Endothelial cell of umbilical vein (primary cell): ENCODE measurements at regions of chrX and their contacts with region 1.

Region 1: DNA sequence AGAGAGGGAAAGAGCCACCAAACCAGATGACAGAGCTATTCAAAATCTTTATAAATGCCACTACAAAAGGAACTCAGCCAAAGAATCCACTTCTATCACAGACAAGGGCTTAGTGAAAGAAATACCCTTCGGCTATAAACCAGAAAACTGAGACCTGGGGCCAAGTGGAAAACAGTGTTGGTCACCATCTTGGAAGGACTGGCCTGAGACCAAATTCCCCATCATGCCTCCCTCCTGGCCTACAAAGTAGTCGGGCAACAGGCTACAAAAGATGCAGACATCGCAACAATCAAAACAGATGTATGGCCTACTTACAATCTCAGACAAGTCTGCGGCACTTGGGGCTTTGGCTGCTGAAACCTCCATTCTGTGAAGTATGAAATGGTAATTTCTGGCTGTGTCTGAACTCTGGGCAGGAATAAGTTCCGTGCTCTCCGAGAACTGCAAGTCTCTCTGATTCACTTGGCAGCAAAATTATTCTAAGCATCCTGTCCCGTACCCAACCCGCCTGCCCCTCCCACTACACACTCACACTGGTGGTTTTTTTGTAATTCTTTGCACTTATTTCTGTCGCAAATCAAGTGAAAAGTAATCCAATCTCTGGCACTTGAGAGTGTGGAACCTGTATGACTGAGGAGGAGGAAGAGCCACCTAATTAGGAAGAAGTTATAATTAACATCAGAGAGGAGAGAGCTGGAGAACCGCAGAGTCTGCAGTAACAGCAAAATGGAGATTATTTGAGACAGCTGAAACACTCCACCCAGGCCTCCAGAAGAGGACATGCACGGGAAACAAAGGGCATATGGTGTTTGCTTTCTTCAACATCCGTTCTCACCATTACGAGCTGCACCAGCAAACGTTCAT is 87.8 kb downstream of the SH3KBP1 start:
- DNase-seq: peak; percentile 55
- H3K4me3 ChIP-seq: peak overlapping the region in 1 of 3 experiments; percentile 16
- H3K27ac ChIP-seq: peak overlapping the region; percentile 26
- H3K4me1 ChIP-seq: peaks cover 19% of the 10 kb centered on the region
- H3K27me3 ChIP-seq: no peaks in the 10 kb centered on the region
- CTCF ChIP-seq: no peak
- POLR2A ChIP-seq: no peak

Region 2: DNA sequence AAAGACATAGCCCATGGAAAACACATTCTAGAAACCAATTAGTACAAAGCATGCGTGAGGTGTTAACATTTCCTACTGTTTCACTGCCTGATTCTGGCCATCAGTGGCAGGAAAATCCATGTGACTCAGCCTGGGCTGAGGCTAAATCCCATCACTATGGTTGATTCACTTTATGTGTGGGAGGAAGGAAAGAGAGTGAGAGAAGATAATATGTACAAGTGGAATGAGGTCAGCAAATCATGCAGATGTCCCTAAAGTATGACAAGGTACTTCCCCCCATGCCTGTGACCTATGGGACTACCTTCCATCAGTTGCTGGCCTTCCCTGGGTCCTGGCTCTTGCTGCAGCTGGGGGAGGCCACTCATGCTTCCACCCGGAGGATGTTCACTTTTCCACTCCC is 220.1 kb before region 1 on chrX:
- CTCF ChIA-PET with region 1: no interaction called
- POLR2A ChIA-PET with region 1: no interaction called
- dilution Hi-C with region 1: no loop called
- intact Hi-C with region 1: no loop called
- DNase-seq: peak; percentile 2
- H3K4me3 ChIP-seq: no peak overlapping the region
- H3K27ac ChIP-seq: no peak overlapping the region
- H3K4me1 ChIP-seq: peaks cover 2% of the 10 kb centered on the region
- H3K27me3 ChIP-seq: no peaks in the 10 kb centered on the region
- CTCF ChIP-seq: no peak
- POLR2A ChIP-seq: no peak

Region 3: DNA sequence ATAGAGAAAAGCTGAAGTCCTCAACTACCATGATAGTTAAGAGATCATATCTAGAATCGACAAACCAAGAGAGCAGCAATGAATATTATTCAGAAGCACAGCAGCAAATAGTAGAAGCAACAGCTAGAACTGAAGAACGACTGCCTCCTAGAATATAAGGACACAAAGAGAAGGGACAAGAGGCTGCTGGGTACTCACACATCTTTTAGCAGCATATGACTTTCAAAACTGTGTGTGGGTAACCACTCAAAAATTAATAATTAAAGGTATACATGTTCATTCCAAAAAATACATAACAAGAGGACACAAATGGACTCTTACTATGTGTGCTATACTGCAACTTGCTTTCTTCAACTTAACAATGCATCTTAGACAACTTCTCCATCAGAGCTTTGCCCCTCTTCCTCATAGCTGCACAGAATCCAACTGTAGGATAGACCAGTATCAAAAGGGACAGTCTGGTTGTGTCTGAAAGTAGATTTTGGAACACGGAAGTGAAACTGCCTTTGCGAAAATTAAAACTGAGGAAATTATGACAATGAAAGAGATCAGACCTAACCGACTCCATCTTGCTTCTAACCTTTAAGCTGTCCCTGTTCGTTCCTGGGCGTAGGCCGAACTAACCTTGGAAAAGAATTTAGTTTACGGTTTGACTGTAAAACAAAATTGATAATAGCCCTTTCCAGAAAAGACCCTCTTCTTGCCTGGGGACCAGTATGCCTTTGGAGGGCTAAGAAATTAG is 37.8 kb before region 1 on chrX:
- CTCF ChIA-PET with region 1: no interaction called
- POLR2A ChIA-PET with region 1: no interaction called
- dilution Hi-C with region 1: no loop called
- intact Hi-C with region 1: loop called (anchors 5 kb)
- DNase-seq: no peak
- H3K4me3 ChIP-seq: no peak overlapping the region
- H3K27ac ChIP-seq: no peak overlapping the region
- H3K4me1 ChIP-seq: peaks cover 10% of the 10 kb centered on the region
- H3K27me3 ChIP-seq: no peaks in the 10 kb centered on the region
- CTCF ChIP-seq: no peak
- POLR2A ChIP-seq: no peak

Region 4: GRCh38 chrX:20217275-20217674 is 417.7 kb after region 1 on chrX:
- CTCF ChIA-PET with region 1: no interaction called
- POLR2A ChIA-PET with region 1: no interaction called
- dilution Hi-C with region 1: no loop called
- intact Hi-C with region 1: no loop called
- DNase-seq: peak; percentile 82
- H3K4me3 ChIP-seq: peak overlapping the region in 2 of 3 experiments; percentile 37 to 95
- H3K27ac ChIP-seq: peak overlapping the region; percentile 78
- H3K4me1 ChIP-seq: peaks cover 24% of the 10 kb centered on the region
- H3K27me3 ChIP-seq: no peaks in the 10 kb centered on the region
- CTCF ChIP-seq: no peak
- POLR2A ChIP-seq: no peak